ENCODE measurements at regions of chr9 and their contacts with region 1.

Region 1: GRCh38 chr9:29668732-29669131 is 2095.5 kb upstream of the C9orf72 start:
- DNase-seq: no peak
- ATAC-seq: no peak
- H3K4me3 ChIP-seq: no peak overlapping the region
- H3K27ac ChIP-seq: no peak overlapping the region
- H3K4me1 ChIP-seq: no peaks in the 10 kb centered on the region
- H3K27me3 ChIP-seq: no peaks in the 10 kb centered on the region
- CTCF ChIP-seq: no peak

Region 2: DNA sequence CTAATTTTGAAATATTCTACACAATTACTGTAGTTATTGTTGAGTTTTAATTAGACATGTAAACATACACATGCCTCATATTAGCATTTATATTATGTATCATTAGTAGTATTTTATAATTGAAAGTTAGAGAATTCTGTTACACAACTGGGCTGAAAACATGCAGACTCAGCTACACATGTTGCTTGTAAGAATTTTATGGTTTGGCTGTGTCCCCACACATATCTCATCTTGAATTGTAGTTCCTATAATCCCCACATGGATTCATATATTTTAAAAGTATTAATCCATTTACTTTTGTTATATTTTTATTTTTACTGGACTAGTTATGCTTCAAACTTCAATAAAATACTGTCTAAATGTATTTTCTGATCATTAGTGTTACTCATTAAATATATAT is 20.1 kb before region 1 on chr9:
- CTCF ChIA-PET with region 1: no interaction called
- POLR2A ChIA-PET with region 1: no interaction called
- in situ Hi-C with region 1: no loop called
- intact Hi-C with region 1: loop called (anchors 1 kb)
- DNase-seq: no peak
- ATAC-seq: no peak
- H3K4me3 ChIP-seq: no peak overlapping the region
- H3K27ac ChIP-seq: no peak overlapping the region
- H3K4me1 ChIP-seq: no peaks in the 10 kb centered on the region
- H3K27me3 ChIP-seq: no peaks in the 10 kb centered on the region
- CTCF ChIP-seq: no peak

Region 3: DNA sequence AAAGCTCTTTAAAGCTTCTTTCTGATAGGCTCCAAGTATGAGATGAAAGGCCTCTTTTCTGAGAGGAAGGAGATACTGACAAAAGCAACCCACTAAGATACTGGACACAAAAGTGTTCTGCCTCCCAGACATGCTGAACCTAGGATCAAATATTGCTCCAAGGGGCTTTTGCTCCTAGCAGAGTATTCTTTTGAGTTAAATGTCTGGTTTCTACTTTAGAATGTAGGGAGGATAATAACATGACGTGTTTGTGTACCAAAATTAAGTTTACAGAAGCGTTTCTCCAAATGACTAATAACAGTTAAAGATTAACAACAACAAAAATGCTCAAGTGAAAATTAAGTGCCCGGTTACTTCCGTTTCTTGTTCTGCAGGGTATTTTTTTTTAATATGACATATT is 197.8 kb after region 1 on chr9:
- CTCF ChIA-PET with region 1: no interaction called
- POLR2A ChIA-PET with region 1: no interaction called
- in situ Hi-C with region 1: no loop called
- intact Hi-C with region 1: no loop called
- DNase-seq: no peak
- ATAC-seq: no peak
- H3K4me3 ChIP-seq: no peak overlapping the region
- H3K27ac ChIP-seq: no peak overlapping the region
- H3K4me1 ChIP-seq: no peaks in the 10 kb centered on the region
- H3K27me3 ChIP-seq: no peaks in the 10 kb centered on the region
- CTCF ChIP-seq: no peak